ENCODE measurements at regions of chr10 and their contacts with region 1.

Region 1: DNA sequence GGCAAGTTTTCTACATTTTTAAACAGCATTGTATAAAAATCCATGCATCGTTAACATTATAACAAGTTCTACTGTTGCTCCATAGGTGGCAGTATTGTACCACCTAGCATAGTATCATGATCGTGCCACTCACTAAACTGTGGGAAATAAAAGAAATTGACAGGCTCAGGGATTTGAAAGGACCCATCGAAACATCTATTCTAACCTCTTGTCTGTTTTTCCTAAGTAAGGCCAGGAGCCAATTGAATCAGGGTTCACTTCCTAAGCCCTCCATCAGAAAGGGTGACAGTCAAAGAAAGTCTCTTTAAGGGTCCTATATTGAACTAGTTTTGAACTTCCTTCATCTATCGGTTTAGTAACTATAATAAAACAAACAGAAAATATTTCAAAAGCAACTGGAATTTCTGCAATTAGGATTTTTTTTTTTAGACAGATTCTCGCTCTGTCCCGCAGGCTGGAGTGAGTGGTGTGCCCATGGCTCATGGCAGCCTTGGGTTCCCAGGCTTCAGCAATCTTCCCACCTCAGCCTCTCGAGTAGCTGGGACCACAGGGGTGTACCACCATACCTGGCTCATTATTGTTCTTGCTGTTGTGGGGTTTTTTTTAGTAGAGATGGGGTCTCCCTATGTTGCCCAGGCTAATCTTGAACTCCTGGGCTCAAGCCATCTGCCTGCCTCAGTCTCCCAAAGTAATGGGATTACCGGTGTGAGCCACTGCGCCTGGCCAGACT is 9.4 kb downstream of the HACD1 start:
- DNase-seq: no peak

Region 2: GRCh38 chr10:17742918-17743317 is 135.2 kb after region 1 on chr10:
- intact Hi-C with region 1: loop called (anchors 2 kb)
- DNase-seq: no peak